ENCODE measurements at regions of chr6 and their contacts with region 1.

Region 1: DNA sequence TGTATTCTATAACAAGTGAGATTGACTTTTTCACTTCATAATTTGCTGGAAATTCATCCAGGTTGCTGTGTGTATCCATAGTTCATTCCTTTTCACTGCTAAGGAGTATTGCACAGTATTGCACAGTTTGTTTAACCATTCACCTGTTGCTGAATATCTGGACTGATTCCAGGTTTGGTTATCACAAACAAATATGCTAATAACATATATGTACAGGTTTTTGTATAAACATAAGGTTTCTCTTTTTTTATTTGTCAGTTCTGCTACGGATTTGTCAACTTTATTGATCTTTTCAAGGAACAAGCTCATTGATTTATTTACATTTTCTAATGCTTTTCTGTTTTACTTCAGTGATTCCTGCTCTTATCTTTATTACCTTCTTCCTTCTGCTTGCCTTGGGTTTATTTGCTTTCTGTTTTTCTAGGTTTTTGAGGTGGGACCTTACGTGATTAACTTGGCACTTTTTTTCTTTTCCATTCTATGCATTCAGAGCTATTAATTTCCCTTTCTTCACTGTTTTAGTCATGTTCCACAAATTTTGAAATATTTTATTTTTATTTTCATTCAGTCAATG is 117.0 kb upstream of the OGFRL1 start:
- DNase-seq: no peak
- ATAC-seq: no peak
- H3K4me3 ChIP-seq: no peak overlapping the region
- H3K27ac ChIP-seq: no peak overlapping the region
- H3K4me1 ChIP-seq: no peaks in the 10 kb centered on the region
- H3K27me3 ChIP-seq: no peaks in the 10 kb centered on the region; the same call in 1 of the 2 replicates
- CTCF ChIP-seq: no peak
- POLR2A ChIP-seq: no peak
- RAD21 ChIP-seq: no peak

Region 2: DNA sequence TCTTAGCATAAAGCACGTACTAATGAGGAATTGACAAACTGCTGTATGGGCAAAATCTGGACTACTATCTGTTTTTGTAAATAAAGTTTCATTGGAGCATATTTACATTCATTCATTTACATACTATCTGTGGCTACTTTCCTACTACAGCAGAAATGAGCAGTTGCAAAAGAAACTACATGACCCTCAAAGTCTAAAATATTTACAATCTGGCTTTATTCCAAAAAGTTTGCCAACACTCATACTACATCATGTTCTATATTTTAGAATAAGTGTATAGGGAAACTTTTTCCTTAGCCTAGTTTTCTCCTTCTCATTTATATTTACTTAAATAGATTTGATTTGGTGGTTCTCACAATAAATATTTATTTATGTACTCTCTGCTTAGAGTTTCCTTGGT is 922.9 kb after region 1 on chr6:
- CTCF ChIA-PET with region 1: no interaction called
- POLR2A ChIA-PET with region 1: no interaction called
- RAD21 ChIA-PET with region 1: no interaction called
- intact Hi-C with region 1: loop called (anchors 10 kb)
- DNase-seq: no peak
- ATAC-seq: no peak
- H3K4me3 ChIP-seq: no peak overlapping the region
- H3K27ac ChIP-seq: no peak overlapping the region
- H3K4me1 ChIP-seq: no peaks in the 10 kb centered on the region
- H3K27me3 ChIP-seq: no peaks in the 10 kb centered on the region
- CTCF ChIP-seq: no peak
- POLR2A ChIP-seq: no peak
- RAD21 ChIP-seq: no peak